Activated CD8-positive, alpha-beta memory T cell treated with anti-CD3 and anti-CD28 coated beads, Interleukin-2, amount 10 ng/mL, durations not matched to agents 7 days and 5 days (primary cell): ENCODE measurements at regions of chr1 and their contacts with region 1.

Region 1: GRCh38 chr1:224458996-224459395 is 24.4 kb upstream of the WDR26 start:
- DNase-seq: no peak
- ATAC-seq: no peak
- H3K4me3 Mint-ChIP-seq: no peak overlapping the region
- H3K27ac Mint-ChIP-seq: no peak overlapping the region
- H3K4me1 Mint-ChIP-seq: peaks cover 29% of the 10 kb centered on the region
- H3K27me3 Mint-ChIP-seq: no peaks in the 10 kb centered on the region

Region 2: GRCh38 chr1:224116131-224116530 is 342.9 kb before region 1 on chr1:
- CTCF ChIA-PET with region 1: interaction called, 19 read pairs
- DNase-seq: no peak
- ATAC-seq: peak; percentile 24
- H3K4me3 Mint-ChIP-seq: peak overlapping the region; percentile 51
- H3K27ac Mint-ChIP-seq: peak overlapping the region; percentile 60
- H3K4me1 Mint-ChIP-seq: peaks cover 31% of the 10 kb centered on the region
- H3K27me3 Mint-ChIP-seq: peaks cover 5% of the 10 kb centered on the region

Region 3: GRCh38 chr1:224329842-224330753 is 128.9 kb before region 1 on chr1 and contains the start of gene NVL:
- CTCF ChIA-PET with region 1: interaction called, 15 read pairs
- DNase-seq: peak; percentile 88
- ATAC-seq: peak; percentile 83
- H3K4me3 Mint-ChIP-seq: peak within 1 kb of the TSS; percentile 98
- H3K27ac Mint-ChIP-seq: peak within 1 kb of the TSS; percentile 99
- H3K4me1 Mint-ChIP-seq: peaks cover 61% of the 10 kb centered on the region
- H3K27me3 Mint-ChIP-seq: no peaks in the 10 kb centered on the region
- total RNA-seq, gene NVL: 47.7 to 53.6 TPM

Region 4: GRCh38 chr1:224434691-224435317 is 24.2 kb before region 1 on chr1 and contains the start of gene WDR26:
- CTCF ChIA-PET with region 1: interaction called, 34 read pairs
- DNase-seq: peak; percentile 93
- ATAC-seq: peak; percentile 89
- H3K4me3 Mint-ChIP-seq: peak within 1 kb of the TSS; percentile 90
- H3K27ac Mint-ChIP-seq: peak within 1 kb of the TSS; percentile 96
- H3K4me1 Mint-ChIP-seq: peaks cover 54% of the 10 kb centered on the region
- H3K27me3 Mint-ChIP-seq: no peaks in the 10 kb centered on the region
- total RNA-seq, gene WDR26: 79.0 to 84.2 TPM

Region 5: GRCh38 chr1:224447251-224447650 is 11.7 kb before region 1 on chr1:
- CTCF ChIA-PET with region 1: interaction called, 17 read pairs
- DNase-seq: no peak
- ATAC-seq: no peak
- H3K4me3 Mint-ChIP-seq: no peak overlapping the region
- H3K27ac Mint-ChIP-seq: no peak overlapping the region
- H3K4me1 Mint-ChIP-seq: peaks cover 12% of the 10 kb centered on the region
- H3K27me3 Mint-ChIP-seq: no peaks in the 10 kb centered on the region